A549 (cell line): ENCODE measurements at regions of chr17 and their contacts with region 1.

Region 1: GRCh38 chr17:700504-701094 is 14.0 kb downstream of the VPS53 start:
- DNase-seq: peak; percentile 35 to 73
- ATAC-seq: peak in 1 of 2 experiments; percentile 71; a peak in 2 of 6 replicates
- H3K4me3 ChIP-seq: no peak overlapping the region
- H3K27ac ChIP-seq: peak overlapping the region in 1 of 2 experiments; percentile 16; a peak in 1 of 6 replicates
- H3K4me1 ChIP-seq: peaks cover 8% of the 10 kb centered on the region
- CTCF ChIP-seq: peak; percentile 94
- EP300 ChIP-seq: no peak
- POLR2A ChIP-seq: no peak
- RAD21 ChIP-seq: peak; percentile 91 to 95

Region 2: DNA sequence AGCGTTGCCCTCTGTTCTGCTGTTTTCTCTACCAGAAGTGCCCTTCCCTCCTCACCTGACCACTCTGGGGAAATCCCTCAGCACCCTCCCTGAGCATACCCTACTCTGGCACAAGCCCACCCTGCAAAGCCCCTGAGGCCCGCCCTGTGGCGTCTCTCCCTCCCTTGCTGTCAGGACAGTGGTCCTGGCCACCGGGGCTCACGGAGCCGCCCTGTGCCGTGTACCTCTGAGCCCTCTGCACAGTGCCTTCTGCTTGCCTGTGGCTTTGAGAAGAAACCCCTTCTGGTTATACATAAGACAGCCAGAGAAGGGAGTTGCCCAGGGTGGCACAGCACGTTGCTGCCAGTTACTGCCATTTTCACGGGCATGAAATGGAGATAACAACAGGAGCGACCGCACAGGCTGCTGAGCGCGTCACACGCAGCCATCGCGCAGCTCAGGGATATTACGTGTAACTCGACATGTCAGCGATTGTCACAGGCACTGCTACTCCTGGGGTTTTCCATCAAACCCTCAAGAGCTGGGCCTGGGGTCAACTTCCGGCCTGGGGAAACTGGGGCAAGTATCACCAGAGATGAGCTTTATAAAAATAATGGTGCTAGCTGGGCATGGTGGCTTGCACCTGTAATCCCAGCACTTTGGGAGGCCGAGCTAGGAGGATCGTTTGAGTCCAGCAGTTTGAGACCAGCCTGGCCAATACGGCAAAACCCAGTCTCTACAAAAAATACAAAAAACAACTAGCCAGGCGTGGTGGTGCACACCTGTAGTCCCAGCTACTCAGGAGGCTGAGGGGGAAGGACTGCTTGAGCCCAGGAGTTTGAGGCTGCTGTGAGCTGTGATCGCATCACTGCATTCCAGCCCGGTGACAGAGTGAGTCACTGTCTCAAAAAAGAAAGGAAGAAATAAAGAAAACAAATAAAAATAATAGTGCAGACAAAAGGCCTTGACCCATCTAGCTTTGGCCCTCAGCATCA is 548.4 kb before region 1 on chr17:
- CTCF ChIA-PET with region 1: interaction called, 12 read pairs
- POLR2A ChIA-PET with region 1: no interaction called
- DNase-seq: peak in 1 of 2 experiments; percentile 33
- ATAC-seq: no peak; a peak in 1 of 6 replicates
- H3K4me3 ChIP-seq: no peak overlapping the region
- H3K27ac ChIP-seq: no peak overlapping the region
- H3K4me1 ChIP-seq: peaks cover 5% of the 10 kb centered on the region; the same call in 1 of the 3 replicates
- CTCF ChIP-seq: no peak
- EP300 ChIP-seq: no peak
- POLR2A ChIP-seq: no peak
- RAD21 ChIP-seq: no peak

Region 3: DNA sequence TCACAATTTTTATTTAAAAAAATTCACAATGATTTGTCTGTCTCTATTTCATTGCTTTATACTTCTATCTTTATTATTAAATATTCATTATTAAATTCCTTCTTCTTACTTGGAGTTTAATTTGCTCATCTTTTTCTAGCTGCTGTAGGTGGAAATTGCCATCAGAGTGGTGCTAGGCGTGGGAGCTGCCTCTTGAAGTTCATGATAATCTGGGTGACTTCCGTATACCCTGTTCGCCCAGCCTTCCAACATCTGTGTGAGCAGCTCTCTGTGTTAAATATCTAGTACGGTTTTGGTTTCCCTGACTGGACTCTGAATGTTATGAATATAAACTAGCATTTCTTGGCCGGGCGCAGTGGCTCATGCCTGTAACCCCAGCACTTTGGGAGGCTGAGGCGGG is 264.0 kb before region 1 on chr17:
- CTCF ChIA-PET with region 1: interaction called, 12 read pairs
- POLR2A ChIA-PET with region 1: no interaction called
- DNase-seq: no peak
- ATAC-seq: no peak
- H3K4me3 ChIP-seq: no peak overlapping the region
- H3K27ac ChIP-seq: no peak overlapping the region
- H3K4me1 ChIP-seq: no peaks in the 10 kb centered on the region
- CTCF ChIP-seq: no peak
- EP300 ChIP-seq: no peak
- POLR2A ChIP-seq: no peak
- RAD21 ChIP-seq: no peak

Region 4: GRCh38 chr17:549177-550040 is 151.2 kb before region 1 on chr17:
- CTCF ChIA-PET with region 1: interaction called, 23 read pairs
- POLR2A ChIA-PET with region 1: no interaction called
- DNase-seq: no peak
- ATAC-seq: no peak
- H3K4me3 ChIP-seq: no peak overlapping the region
- H3K27ac ChIP-seq: no peak overlapping the region
- H3K4me1 ChIP-seq: no peaks in the 10 kb centered on the region
- CTCF ChIP-seq: no peak
- EP300 ChIP-seq: no peak
- POLR2A ChIP-seq: no peak
- RAD21 ChIP-seq: no peak

Region 5: DNA sequence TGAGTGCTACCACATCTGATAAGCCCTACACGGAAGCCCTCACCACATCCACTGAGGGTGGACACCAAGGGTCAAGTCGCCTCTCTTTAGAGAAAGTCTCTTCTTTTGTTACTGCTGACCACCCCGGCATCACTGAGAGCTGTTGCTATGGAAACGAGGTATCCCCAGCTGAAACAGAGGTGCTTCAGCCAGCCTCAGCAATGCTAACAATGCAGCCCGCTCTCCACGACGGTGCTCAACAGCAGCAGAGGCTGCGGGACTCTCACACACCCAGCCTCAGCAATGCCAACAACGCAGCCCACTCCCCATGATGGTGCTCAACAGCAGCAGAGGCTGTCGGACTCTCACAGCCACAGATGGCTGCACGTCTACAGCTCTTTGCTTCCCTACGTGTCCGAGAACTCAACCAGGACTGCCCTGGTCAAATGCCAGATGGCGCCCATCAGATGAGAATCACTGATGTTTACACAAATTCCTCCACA is 27.4 kb before region 1 on chr17:
- CTCF ChIA-PET with region 1: interaction called, 16 read pairs
- POLR2A ChIA-PET with region 1: no interaction called
- DNase-seq: no peak
- ATAC-seq: no peak
- H3K4me3 ChIP-seq: no peak overlapping the region
- H3K27ac ChIP-seq: no peak overlapping the region
- H3K4me1 ChIP-seq: peaks cover 9% of the 10 kb centered on the region
- CTCF ChIP-seq: no peak
- EP300 ChIP-seq: no peak
- POLR2A ChIP-seq: no peak; the same call in 1 of the 2 replicates
- RAD21 ChIP-seq: no peak

Region 6: GRCh38 chr17:740240-741017 is 39.8 kb after region 1 on chr17:
- CTCF ChIA-PET with region 1: interaction called, 10 read pairs
- POLR2A ChIA-PET with region 1: no interaction called
- DNase-seq: no peak
- ATAC-seq: no peak
- H3K4me3 ChIP-seq: no peak overlapping the region
- H3K27ac ChIP-seq: no peak overlapping the region
- H3K4me1 ChIP-seq: no peaks in the 10 kb centered on the region
- CTCF ChIP-seq: no peak
- EP300 ChIP-seq: no peak
- POLR2A ChIP-seq: no peak
- RAD21 ChIP-seq: no peak